CD8-positive, alpha-beta T cell (primary cell): ENCODE measurements at regions of chr9 and their contacts with region 1.

Region 1: GRCh38 chr9:134399435-134400056 is 73.3 kb downstream of the RXRA start:
- DNase-seq: peak in 2 of 9 experiments; percentile 39 to 50
- ATAC-seq: no peak
- H3K4me3 ChIP-seq: no peak overlapping the region
- H3K4me3 Mint-ChIP-seq: no peak overlapping the region
- H3K27ac ChIP-seq: no peak overlapping the region
- H3K27ac Mint-ChIP-seq: no peak overlapping the region
- H3K4me1 ChIP-seq: peaks cover 47% of the 10 kb centered on the region
- H3K4me1 Mint-ChIP-seq: peaks cover 39% of the 10 kb centered on the region
- H3K27me3 ChIP-seq: no peaks in the 10 kb centered on the region
- H3K27me3 Mint-ChIP-seq: no peaks in the 10 kb centered on the region
- CTCF ChIP-seq: peak; percentile 57

Region 2: GRCh38 chr9:134325817-134326723 is 73.5 kb before region 1 on chr9 and contains the start of gene RXRA:
- CTCF ChIA-PET with region 1: interaction called, 3 read pairs
- POLR2A ChIA-PET with region 1: no interaction called
- intact Hi-C with region 1: loop called (anchors 5 to 10 kb)
- DNase-seq: peak; percentile 37 to 87 (median 74)
- ATAC-seq: peak; percentile 69
- H3K4me3 ChIP-seq: peak within 1 kb of the TSS; percentile 68 to 93
- H3K4me3 Mint-ChIP-seq: peak within 1 kb of the TSS; percentile 75
- H3K27ac ChIP-seq: peak within 1 kb of the TSS in 1 of 2 experiments; percentile 33
- H3K27ac Mint-ChIP-seq: no peak within 1 kb of the TSS
- H3K4me1 ChIP-seq: peaks cover 16% of the 10 kb centered on the region
- H3K4me1 Mint-ChIP-seq: peaks cover 2% of the 10 kb centered on the region
- H3K27me3 ChIP-seq: no peaks in the 10 kb centered on the region
- H3K27me3 Mint-ChIP-seq: no peaks in the 10 kb centered on the region
- CTCF ChIP-seq: no peak
- total RNA-seq, gene RXRA: 11.6 to 13.7 TPM